H1 (cell line): ENCODE measurements at regions of chr6 and their contacts with region 1.

Region 1: DNA sequence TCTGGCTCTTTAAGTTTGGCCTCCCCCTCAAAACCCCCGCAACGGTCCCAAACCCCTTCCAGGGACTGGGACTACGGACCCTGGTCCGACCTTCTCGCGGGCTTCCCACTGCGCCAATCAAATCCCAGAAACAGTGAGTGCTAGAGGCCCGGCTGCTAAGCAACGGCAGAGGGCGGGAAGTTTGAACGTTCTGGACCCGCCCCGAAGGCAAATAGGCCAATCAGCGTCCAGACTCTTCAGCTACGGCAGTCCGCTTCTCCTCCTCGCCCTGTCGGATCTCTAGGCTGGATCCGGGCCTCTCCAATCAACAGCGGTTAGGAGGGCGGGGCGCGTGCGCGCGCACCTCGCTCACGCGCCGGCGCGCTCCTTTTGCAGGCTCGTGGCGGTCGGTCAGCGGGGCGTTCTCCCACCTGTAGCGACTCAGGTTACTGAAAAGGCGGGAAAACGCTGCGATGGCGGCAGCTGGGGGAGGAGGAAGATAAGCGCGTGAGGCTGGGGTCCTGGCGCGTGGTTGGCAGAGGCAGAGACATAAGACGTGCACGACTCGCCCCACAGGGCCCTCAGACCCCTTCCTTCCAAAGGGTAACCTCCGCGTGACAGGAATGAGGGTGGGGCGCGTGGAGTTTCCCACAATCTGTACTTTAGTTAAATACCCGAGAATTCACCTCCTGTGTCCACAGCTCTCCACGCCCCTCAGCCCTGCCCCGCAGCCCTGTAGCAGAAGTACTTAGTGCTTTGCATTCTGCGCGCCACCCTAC is at the start of gene MSH5:
- DNase-seq: peak; percentile 98 to 99
- H3K4me3 ChIP-seq: peak within 1 kb of the TSS; percentile 36 to 65 (median 47)
- H3K27ac ChIP-seq: peak within 1 kb of the TSS; percentile 92
- H3K4me1 ChIP-seq: peaks cover 16 to 22% (median 21%) of the 10 kb centered on the region in 4 experiments
- H3K27me3 ChIP-seq: no peaks in the 10 kb centered on the region
- CTCF ChIP-seq: no peak
- EP300 ChIP-seq: peak in 1 of 2 experiments; percentile 35; a peak in 1 of 3 replicates
- POLR2A ChIP-seq: peak in 1 of 2 experiments; percentile 90; a peak in 2 of 3 replicates
- RAD21 ChIP-seq: no peak
- total RNA-seq, gene MSH5: 21.3 and 25.3 TPM in 2 replicates

Region 2: DNA sequence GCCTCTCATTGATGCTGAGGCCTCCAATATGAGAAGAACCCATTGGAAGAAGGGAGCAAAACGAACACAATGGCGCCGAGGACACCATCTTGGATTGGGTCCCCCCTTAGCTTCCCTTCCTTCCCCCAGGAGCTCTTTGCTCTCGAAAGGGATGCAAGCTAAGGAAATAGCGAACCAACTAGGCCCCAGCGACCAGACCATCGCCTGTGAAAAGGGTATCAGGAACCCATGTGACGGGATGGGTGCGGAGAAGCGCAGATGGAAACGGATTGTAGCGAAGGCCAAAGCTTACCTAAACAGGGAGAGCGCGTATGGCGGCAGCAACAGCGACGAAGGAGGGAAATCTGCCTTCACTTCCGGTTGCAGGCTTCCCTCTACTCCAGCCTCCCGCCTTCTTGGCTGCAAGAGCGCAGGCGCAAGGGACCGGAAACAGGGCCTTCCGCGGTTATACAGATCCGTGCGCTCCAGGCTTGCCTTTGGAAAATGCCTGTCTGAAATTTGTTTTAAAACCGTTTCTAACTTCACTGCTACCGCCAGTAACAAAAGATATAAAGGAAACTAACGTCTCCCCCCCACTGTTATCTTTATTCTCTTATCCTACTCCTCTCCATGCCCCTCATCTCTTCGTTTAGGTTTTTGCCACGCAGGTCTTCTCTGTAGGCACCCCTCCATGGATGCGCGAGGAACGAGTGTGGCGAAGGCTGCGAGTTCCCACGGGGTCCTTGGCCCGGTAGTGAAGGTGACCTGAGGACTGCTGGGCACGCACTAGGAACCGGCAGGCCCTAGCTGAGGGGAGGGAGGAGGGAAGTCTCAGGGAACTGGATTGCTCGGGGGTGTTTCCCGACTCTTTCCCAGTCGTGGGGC is 197.9 kb before region 1 on chr6 and contains the start of gene DDX39B:
- CTCF ChIA-PET with region 1: interaction called, 3 read pairs
- POLR2A ChIA-PET with region 1: interaction called, 15 read pairs
- DNase-seq: peak; percentile 89 to 90
- H3K4me3 ChIP-seq: peak within 1 kb of the TSS; percentile 75 to 99 (median 97)
- H3K27ac ChIP-seq: peak within 1 kb of the TSS; percentile 99
- H3K4me1 ChIP-seq: peaks cover 4 to 18% (median 10%) of the 10 kb centered on the region in 4 experiments; a peak in 5 of 7 replicates
- H3K27me3 ChIP-seq: no peaks in the 10 kb centered on the region
- CTCF ChIP-seq: no peak
- EP300 ChIP-seq: peak in 1 of 2 experiments; percentile 20; a peak in 1 of 3 replicates
- POLR2A ChIP-seq: peak; percentile 97 to 99
- RAD21 ChIP-seq: no peak
- total RNA-seq, gene DDX39B: 780 and 794 TPM in 2 replicates

Region 3: DNA sequence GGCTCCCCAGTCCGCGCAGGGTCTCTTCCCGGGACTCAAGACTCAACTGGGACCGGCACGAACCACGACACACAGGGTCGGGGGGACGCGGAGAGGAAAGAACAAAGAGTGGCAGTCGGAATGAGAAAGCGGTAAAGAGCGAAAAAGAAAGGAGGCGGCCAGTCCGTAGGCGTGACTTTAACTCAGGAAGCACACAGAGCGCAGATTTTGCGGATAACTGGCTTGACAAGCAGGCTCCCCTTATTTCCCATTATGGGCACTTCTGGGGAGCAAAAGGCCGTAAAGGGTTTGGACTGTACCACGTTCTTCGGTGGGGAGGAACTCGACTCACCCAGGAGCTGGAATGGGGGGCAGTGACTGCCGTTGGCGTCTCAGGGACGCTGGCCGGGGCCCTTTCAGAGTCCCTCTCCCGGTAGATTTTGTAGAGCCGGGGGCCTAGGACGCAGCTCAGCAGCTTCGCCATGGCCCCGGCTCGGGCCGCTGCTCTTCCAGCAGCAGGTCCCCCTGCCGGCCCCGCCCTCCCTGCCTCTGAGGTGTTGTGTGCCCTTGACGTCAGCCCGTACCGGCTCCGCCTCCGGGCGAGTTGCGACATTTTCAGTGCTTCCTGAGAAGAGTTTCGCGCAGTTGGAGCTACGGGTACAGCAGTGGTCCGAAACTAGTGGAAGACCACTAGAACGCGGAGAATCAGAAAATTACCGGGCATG is 36.8 kb before region 1 on chr6 and contains the start of gene ABHD16A:
- CTCF ChIA-PET with region 1: interaction called, 3 read pairs
- POLR2A ChIA-PET with region 1: interaction called, 13 read pairs
- DNase-seq: peak; percentile 95 to 96
- H3K4me3 ChIP-seq: peak within 1 kb of the TSS; percentile 69 to 94 (median 90)
- H3K27ac ChIP-seq: peak within 1 kb of the TSS; percentile 89; the same call in 1 of the 2 replicates
- H3K4me1 ChIP-seq: peaks cover 2 to 5% (median 3%) of the 10 kb centered on the region in 4 experiments; a peak in 4 of 7 replicates
- H3K27me3 ChIP-seq: no peaks in the 10 kb centered on the region
- CTCF ChIP-seq: no peak
- EP300 ChIP-seq: peak; percentile 23 to 88
- POLR2A ChIP-seq: peak in 1 of 2 experiments; percentile 85; a peak in 2 of 3 replicates
- RAD21 ChIP-seq: no peak
- total RNA-seq, gene ABHD16A: 29.3 and 32.9 TPM in 2 replicates

Region 4: GRCh38 chr6:31729515-31729978 is 10.3 kb before region 1 on chr6:
- CTCF ChIA-PET with region 1: interaction called, 52 read pairs
- POLR2A ChIA-PET with region 1: interaction called, 73 read pairs
- DNase-seq: peak; percentile 87 to 96
- H3K4me3 ChIP-seq: peak overlapping the region; percentile 56 to 91 (median 83)
- H3K27ac ChIP-seq: peak overlapping the region; percentile 49; the same call in 1 of the 2 replicates
- H3K4me1 ChIP-seq: peaks cover 8 to 19% (median 11%) of the 10 kb centered on the region in 4 experiments
- H3K27me3 ChIP-seq: no peaks in the 10 kb centered on the region
- CTCF ChIP-seq: peak in 2 of 3 experiments; percentile 86 to 87; a peak in 3 of 4 replicates
- EP300 ChIP-seq: no peak
- POLR2A ChIP-seq: no peak
- RAD21 ChIP-seq: peak; percentile 83 to 90

Region 5: GRCh38 chr6:31769684-31770371 is 30.0 kb after region 1 on chr6:
- CTCF ChIA-PET with region 1: interaction called, 42 read pairs
- POLR2A ChIA-PET with region 1: interaction called, 14 read pairs
- DNase-seq: peak; percentile 63 to 96
- H3K4me3 ChIP-seq: no peak overlapping the region
- H3K27ac ChIP-seq: no peak overlapping the region
- H3K4me1 ChIP-seq: peaks cover 0 to 5% (median under 1%) of the 10 kb centered on the region in 4 experiments; a peak in 4 of 7 replicates
- H3K27me3 ChIP-seq: no peaks in the 10 kb centered on the region
- CTCF ChIP-seq: peak in 2 of 3 experiments; percentile 85 to 95; a peak in 3 of 4 replicates
- EP300 ChIP-seq: no peak
- POLR2A ChIP-seq: no peak
- RAD21 ChIP-seq: peak; percentile 73 to 75

Region 6: DNA sequence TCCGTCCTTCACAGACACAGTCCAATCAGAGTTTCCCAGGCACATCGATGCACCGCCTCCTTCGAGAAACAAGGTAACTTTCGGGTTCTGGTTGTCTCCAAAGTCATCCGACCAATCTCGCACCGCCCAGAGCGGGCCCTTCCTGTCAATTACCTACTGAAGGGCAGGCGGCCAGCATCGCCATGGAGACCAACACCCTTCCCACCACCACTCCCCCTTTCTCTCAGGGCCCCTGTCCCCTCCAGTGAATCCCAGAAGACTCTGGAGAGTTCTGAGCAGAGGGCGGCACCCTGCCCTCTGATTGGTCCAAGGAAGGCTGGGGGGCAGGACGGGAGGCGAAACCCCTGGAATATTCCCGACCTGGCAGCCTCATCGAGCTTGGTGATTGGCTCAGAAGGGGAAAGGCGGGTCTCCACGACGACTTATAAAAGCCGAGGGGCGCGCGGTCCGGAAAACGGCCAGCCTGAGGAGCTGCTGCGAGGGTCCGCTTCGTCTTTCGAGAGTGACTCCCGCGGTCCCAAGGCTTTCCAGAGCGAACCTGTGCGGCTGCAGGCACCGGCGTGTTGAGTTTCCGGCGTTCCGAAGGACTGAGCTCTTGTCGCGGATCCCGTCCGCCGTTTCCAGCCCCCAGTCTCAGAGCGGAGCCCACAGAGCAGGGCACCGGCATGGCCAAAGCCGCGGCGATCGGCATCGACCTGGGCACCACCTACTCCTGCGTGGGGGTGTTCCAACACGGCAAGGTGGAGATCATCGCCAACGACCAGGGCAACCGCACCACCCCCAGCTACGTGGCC is 87.7 kb after region 1 on chr6 and contains the start of gene HSPA1B:
- CTCF ChIA-PET with region 1: interaction called, 13 read pairs
- POLR2A ChIA-PET with region 1: interaction called, 14 read pairs
- DNase-seq: peak; percentile 98
- H3K4me3 ChIP-seq: peak within 1 kb of the TSS; percentile 55 to 75 (median 72)
- H3K27ac ChIP-seq: peak within 1 kb of the TSS; percentile 77
- H3K4me1 ChIP-seq: peaks cover 5 to 12% (median 9%) of the 10 kb centered on the region in 4 experiments; a peak in 6 of 7 replicates
- H3K27me3 ChIP-seq: no peaks in the 10 kb centered on the region
- CTCF ChIP-seq: no peak
- EP300 ChIP-seq: no peak
- POLR2A ChIP-seq: peak; percentile 99 to 100
- RAD21 ChIP-seq: no peak
- total RNA-seq, gene HSPA1B: 76.6 and 89.3 TPM in 2 replicates